ENCODE measurements at regions of chr21 and their contacts with region 1.

Region 1: DNA sequence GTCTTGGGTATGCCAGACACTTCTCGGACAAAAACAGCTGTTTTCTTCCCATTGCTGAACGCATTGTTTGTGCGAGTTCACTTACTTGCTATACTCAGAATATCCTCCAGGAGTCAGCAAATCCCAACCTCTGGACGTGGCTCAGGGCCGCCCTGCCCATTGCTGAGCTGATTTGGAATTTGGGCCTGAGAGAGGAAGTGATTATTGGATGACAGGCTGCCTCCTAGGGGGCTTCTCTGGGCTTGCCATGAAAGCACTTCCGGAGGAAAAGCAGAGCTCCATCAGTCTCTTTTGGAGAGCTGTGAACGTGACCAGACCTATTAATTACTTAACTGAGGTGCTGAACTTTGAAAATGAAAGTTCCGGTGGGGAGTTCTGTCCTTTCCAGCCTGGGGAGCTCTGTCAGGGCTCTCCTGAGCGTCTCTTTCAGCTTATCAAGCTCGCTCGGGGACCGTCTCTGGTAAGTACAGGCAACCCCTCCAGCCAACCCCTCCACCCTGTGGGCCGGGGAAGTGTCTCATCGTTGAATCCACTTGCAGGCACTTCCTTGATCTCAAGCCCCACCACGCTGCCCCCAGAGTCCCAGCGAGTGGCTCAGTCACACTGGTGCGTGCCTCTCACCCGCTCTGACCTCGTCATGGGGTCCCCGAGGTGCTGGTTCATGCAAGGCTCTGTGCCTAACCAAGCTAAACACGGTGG is 76.9 kb downstream of the CLIC6 start:
- DNase-seq: peak; percentile 70 to 83 (median 80)
- H3K4me3 ChIP-seq: peak overlapping the region in 2 of 3 experiments; percentile 23 to 68
- H3K4me3 Mint-ChIP-seq: peak overlapping the region; percentile 75 to 89
- H3K27ac ChIP-seq: peak overlapping the region in 1 of 2 donors; percentile 48
- H3K27ac Mint-ChIP-seq: peak overlapping the region in 3 of 7 donors; percentile 16 to 46 (median 41)
- H3K4me1 ChIP-seq: peaks cover 5 to 9% of the 10 kb centered on the region in 2 donors
- H3K4me1 Mint-ChIP-seq: peaks cover 6% of the 10 kb centered on the region
- H3K27me3 ChIP-seq: no peaks in the 10 kb centered on the region
- H3K27me3 Mint-ChIP-seq: peaks cover 3 to 6% (median 6%) of the 10 kb centered on the region in 3 donors
- CTCF ChIP-seq: peak; percentile 91

Region 2: DNA sequence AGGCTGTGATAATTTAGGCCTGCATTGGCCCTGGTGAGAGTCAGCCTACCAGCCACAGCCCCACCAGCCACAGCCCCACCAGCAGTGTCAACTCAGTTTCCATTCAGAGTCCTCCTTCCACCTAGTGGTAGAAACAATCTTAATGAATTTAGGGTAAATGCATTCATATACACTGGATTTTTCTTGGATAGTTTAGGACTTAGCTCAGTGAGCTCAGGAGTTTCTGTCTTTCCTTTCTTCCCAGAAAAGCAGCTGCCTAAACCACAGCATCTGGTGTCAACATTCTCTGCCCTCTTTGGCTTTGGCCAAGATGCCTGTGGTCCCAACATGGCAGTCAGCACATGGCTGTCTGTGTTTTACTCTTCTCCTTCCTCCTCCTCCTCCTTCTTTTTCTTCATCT is 17.1 kb after region 1 on chr21:
- intact Hi-C with region 1: no loop called
- DNase-seq: no peak
- H3K4me3 ChIP-seq: no peak overlapping the region
- H3K4me3 Mint-ChIP-seq: no peak overlapping the region
- H3K27ac ChIP-seq: no peak overlapping the region
- H3K27ac Mint-ChIP-seq: no peak overlapping the region
- H3K4me1 ChIP-seq: no peaks in the 10 kb centered on the region
- H3K4me1 Mint-ChIP-seq: no peaks in the 10 kb centered on the region
- H3K27me3 ChIP-seq: no peaks in the 10 kb centered on the region
- H3K27me3 Mint-ChIP-seq: peaks cover 2 to 10% (median 5%) of the 10 kb centered on the region in 3 donors
- CTCF ChIP-seq: no peak

Region 3: GRCh38 chr21:34865928-34866284 is 120.2 kb after region 1 on chr21:
- intact Hi-C with region 1: loop called in 1 of 2 experiments (anchors 5 kb)
- DNase-seq: peak; percentile 86 to 94 (median 93)
- H3K4me3 ChIP-seq: peak overlapping the region in 1 of 3 experiments; percentile 36
- H3K4me3 Mint-ChIP-seq: peak overlapping the region; percentile 39 to 64
- H3K27ac ChIP-seq: peak overlapping the region; percentile 25 to 78
- H3K27ac Mint-ChIP-seq: peak overlapping the region; percentile 88 to 93 (median 90)
- H3K4me1 ChIP-seq: peaks cover 38 to 39% of the 10 kb centered on the region in 2 donors
- H3K4me1 Mint-ChIP-seq: peaks cover 54% of the 10 kb centered on the region
- H3K27me3 ChIP-seq: peaks cover 0 to 3% of the 10 kb centered on the region in 2 donors
- H3K27me3 Mint-ChIP-seq: peaks cover 11 to 17% (median 14%) of the 10 kb centered on the region in 3 donors
- CTCF ChIP-seq: no peak

Region 4: GRCh38 chr21:35563885-35564451 is 818.3 kb after region 1 on chr21:
- intact Hi-C with region 1: no loop called
- DNase-seq: peak; percentile 12 to 28 (median 15)
- H3K4me3 ChIP-seq: peak overlapping the region in 1 of 3 experiments; percentile 33
- H3K4me3 Mint-ChIP-seq: peak overlapping the region in 1 of 2 donors; percentile 82
- H3K27ac ChIP-seq: no peak overlapping the region
- H3K27ac Mint-ChIP-seq: peak overlapping the region in 2 of 7 donors; percentile 27 to 58
- H3K4me1 ChIP-seq: peaks cover 16 to 25% of the 10 kb centered on the region in 2 donors
- H3K4me1 Mint-ChIP-seq: peaks cover 39% of the 10 kb centered on the region
- H3K27me3 ChIP-seq: no peaks in the 10 kb centered on the region
- H3K27me3 Mint-ChIP-seq: no peaks in the 10 kb centered on the region
- CTCF ChIP-seq: no peak

Region 5: GRCh38 chr21:35840197-35840799 is 1094.6 kb after region 1 on chr21:
- intact Hi-C with region 1: loop called (anchors 2 to 5 kb)
- DNase-seq: peak; percentile 50 to 68 (median 61)
- H3K4me3 ChIP-seq: no peak overlapping the region
- H3K4me3 Mint-ChIP-seq: no peak overlapping the region
- H3K27ac ChIP-seq: no peak overlapping the region
- H3K27ac Mint-ChIP-seq: no peak overlapping the region
- H3K4me1 ChIP-seq: no peaks in the 10 kb centered on the region
- H3K4me1 Mint-ChIP-seq: no peaks in the 10 kb centered on the region
- H3K27me3 ChIP-seq: no peaks in the 10 kb centered on the region
- H3K27me3 Mint-ChIP-seq: peaks cover 1 to 3% (median 2%) of the 10 kb centered on the region in 3 donors
- CTCF ChIP-seq: peak; percentile 83

Region 6: GRCh38 chr21:35940074-35940927 is 1194.6 kb after region 1 on chr21:
- intact Hi-C with region 1: loop called in 1 of 2 experiments (anchors 2 kb)
- DNase-seq: peak; percentile 59 to 74 (median 67)
- H3K4me3 ChIP-seq: no peak overlapping the region
- H3K4me3 Mint-ChIP-seq: peak overlapping the region in 1 of 2 donors; percentile 57
- H3K27ac ChIP-seq: no peak overlapping the region
- H3K27ac Mint-ChIP-seq: no peak overlapping the region
- H3K4me1 ChIP-seq: peaks cover 0 to 3% of the 10 kb centered on the region in 2 donors
- H3K4me1 Mint-ChIP-seq: peaks cover 6% of the 10 kb centered on the region
- H3K27me3 ChIP-seq: no peaks in the 10 kb centered on the region
- H3K27me3 Mint-ChIP-seq: no peaks in the 10 kb centered on the region
- CTCF ChIP-seq: peak; percentile 73

Region 7: GRCh38 chr21:36028127-36029069 is 1282.7 kb after region 1 on chr21:
- intact Hi-C with region 1: loop called in 1 of 2 experiments (anchors 5 kb)
- DNase-seq: peak; percentile 49 to 66 (median 52)
- H3K4me3 ChIP-seq: no peak overlapping the region
- H3K4me3 Mint-ChIP-seq: no peak overlapping the region
- H3K27ac ChIP-seq: no peak overlapping the region
- H3K27ac Mint-ChIP-seq: peak overlapping the region in 2 of 7 donors; percentile 10 to 12
- H3K4me1 ChIP-seq: no peaks in the 10 kb centered on the region
- H3K4me1 Mint-ChIP-seq: peaks cover 5% of the 10 kb centered on the region
- H3K27me3 ChIP-seq: no peaks in the 10 kb centered on the region
- H3K27me3 Mint-ChIP-seq: peaks cover 0 to 7% (median 7%) of the 10 kb centered on the region in 3 donors
- CTCF ChIP-seq: peak; percentile 92